Endothelial cell of umbilical vein (primary cell): ENCODE measurements at regions of chr6 and their contacts with region 1.

Region 1: GRCh38 chr6:143677891-143678791 is at the start of gene PHACTR2:
- DNase-seq: peak; percentile 82
- H3K4me3 ChIP-seq: peak within 1 kb of the TSS; percentile 32 to 89 (median 80)
- H3K27ac ChIP-seq: peak within 1 kb of the TSS; percentile 91
- H3K4me1 ChIP-seq: peaks cover 38% of the 10 kb centered on the region
- H3K27me3 ChIP-seq: no peaks in the 10 kb centered on the region
- CTCF ChIP-seq: no peak
- POLR2A ChIP-seq: peak; percentile 94
- total RNA-seq, gene PHACTR2: 160 and 178 TPM in 2 replicates

Region 2: DNA sequence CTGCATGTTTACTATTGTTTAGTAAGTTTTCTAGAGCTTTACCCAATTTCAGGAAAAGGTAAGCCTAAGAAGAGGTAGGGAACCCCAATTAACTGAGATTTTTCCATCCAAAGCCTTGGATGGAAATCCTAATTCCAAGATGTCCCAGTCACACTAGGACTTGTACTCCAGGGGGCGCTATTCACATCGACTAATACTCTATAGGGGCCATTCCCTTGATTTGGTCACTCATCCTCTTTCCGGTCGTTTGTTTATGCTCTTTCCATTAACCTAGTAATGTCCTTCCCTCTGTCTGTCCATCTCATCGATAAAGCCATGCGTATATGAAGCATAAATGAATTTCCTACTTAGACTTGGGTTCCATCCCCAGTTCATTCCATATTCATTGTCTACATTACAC is 85.8 kb before region 1 on chr6:
- CTCF ChIA-PET with region 1: no interaction called
- POLR2A ChIA-PET with region 1: no interaction called
- dilution Hi-C with region 1: no loop called
- intact Hi-C with region 1: loop called (anchors 5 kb)
- DNase-seq: no peak
- H3K4me3 ChIP-seq: no peak overlapping the region
- H3K27ac ChIP-seq: no peak overlapping the region
- H3K4me1 ChIP-seq: no peaks in the 10 kb centered on the region
- H3K27me3 ChIP-seq: no peaks in the 10 kb centered on the region
- CTCF ChIP-seq: peak; percentile 13 to 24
- POLR2A ChIP-seq: no peak

Region 3: GRCh38 chr6:143695130-143695968 is 17.2 kb after region 1 on chr6:
- CTCF ChIA-PET with region 1: interaction called, 3 read pairs
- POLR2A ChIA-PET with region 1: no interaction called
- dilution Hi-C with region 1: no loop called
- intact Hi-C with region 1: loop called (anchors 1 kb)
- DNase-seq: peak; percentile 49
- H3K4me3 ChIP-seq: no peak overlapping the region
- H3K27ac ChIP-seq: peak overlapping the region; percentile 0
- H3K4me1 ChIP-seq: peaks cover 53% of the 10 kb centered on the region
- H3K27me3 ChIP-seq: no peaks in the 10 kb centered on the region
- CTCF ChIP-seq: no peak
- POLR2A ChIP-seq: no peak

Region 4: GRCh38 chr6:143759666-143760065 is 81.5 kb after region 1 on chr6:
- CTCF ChIA-PET with region 1: interaction called, 4 read pairs
- POLR2A ChIA-PET with region 1: no interaction called
- dilution Hi-C with region 1: no loop called
- intact Hi-C with region 1: loop called (anchors 1 kb)
- DNase-seq: peak; percentile 36
- H3K4me3 ChIP-seq: no peak overlapping the region
- H3K27ac ChIP-seq: peak overlapping the region; percentile 32
- H3K4me1 ChIP-seq: peaks cover 33% of the 10 kb centered on the region
- H3K27me3 ChIP-seq: no peaks in the 10 kb centered on the region
- CTCF ChIP-seq: no peak
- POLR2A ChIP-seq: no peak

Region 5: DNA sequence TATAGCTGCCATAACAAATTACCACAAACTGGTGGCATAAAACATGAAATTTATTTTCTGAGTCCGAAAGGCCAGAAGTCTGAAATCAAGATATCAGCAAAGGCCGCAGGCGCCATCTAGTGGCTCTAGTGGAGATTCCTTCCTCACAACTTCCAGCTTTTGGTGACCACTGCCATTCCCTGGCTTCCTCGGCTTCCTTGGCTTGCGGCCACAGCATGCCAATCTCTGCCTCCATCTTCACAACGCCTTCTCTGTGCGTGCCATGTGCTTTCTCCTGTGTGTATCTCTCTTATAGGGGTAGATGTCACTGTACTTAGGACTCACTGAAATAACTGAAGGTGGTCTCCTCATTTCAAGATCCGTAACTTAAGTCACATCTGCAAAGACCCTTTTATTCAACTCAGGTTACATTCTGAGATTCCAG is 335.4 kb after region 1 on chr6:
- CTCF ChIA-PET with region 1: no interaction called
- POLR2A ChIA-PET with region 1: no interaction called
- dilution Hi-C with region 1: no loop called
- intact Hi-C with region 1: loop called (anchors 2 kb)
- DNase-seq: peak; percentile 77
- H3K4me3 ChIP-seq: no peak overlapping the region
- H3K27ac ChIP-seq: no peak overlapping the region
- H3K4me1 ChIP-seq: no peaks in the 10 kb centered on the region
- H3K27me3 ChIP-seq: peaks cover 11 to 16% of the 10 kb centered on the region in 2 experiments
- CTCF ChIP-seq: peak; percentile 80 to 83
- POLR2A ChIP-seq: no peak